H1 (cell line): ENCODE measurements at regions of chr1 and their contacts with region 1.

Region 1: GRCh38 chr1:157193702-157194391 is 55.7 kb upstream of the ETV3 start:
- DNase-seq: peak; percentile 53 to 95
- H3K4me3 ChIP-seq: no peak overlapping the region
- H3K27ac ChIP-seq: no peak overlapping the region
- H3K4me1 ChIP-seq: peaks cover 0 to 2% (median under 1%) of the 10 kb centered on the region in 4 experiments; a peak in 1 of 7 replicates
- H3K27me3 ChIP-seq: no peaks in the 10 kb centered on the region; a peak in 2 of 7 replicates
- CTCF ChIP-seq: peak; percentile 67 to 84 (median 80)
- EP300 ChIP-seq: no peak
- POLR2A ChIP-seq: no peak
- RAD21 ChIP-seq: peak; percentile 80 to 81

Region 2: DNA sequence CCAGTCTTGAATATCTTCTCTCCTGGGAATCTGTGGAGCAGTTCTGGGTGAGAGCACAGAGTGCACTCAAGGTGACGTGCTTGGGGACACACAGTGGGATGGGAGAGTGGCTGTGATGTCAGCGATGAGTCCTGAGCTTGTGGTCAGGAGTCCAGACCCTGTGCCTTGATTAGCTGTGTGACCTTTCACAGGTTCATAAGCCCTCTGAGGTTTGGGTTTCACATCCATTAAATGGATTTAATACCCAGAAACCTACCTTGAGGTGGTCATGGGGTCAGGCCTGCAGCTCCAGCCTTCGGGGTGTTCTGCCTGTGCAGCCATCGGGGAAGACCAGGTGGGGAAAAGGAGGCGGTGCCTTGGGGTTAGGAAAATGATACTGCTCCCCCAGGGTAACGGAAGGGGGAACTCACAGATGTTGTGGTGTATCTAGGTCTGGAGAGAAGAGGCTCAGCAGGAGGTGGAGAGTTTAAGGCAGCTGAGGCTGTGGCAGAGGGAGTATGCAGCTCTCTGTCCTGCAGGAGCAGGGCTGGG is 17.2 kb before region 1 on chr1:
- CTCF ChIA-PET with region 1: interaction called, 36 read pairs
- POLR2A ChIA-PET with region 1: no interaction called
- DNase-seq: no peak
- H3K4me3 ChIP-seq: no peak overlapping the region
- H3K27ac ChIP-seq: no peak overlapping the region
- H3K4me1 ChIP-seq: peaks cover 0 to 3% (median 2%) of the 10 kb centered on the region in 4 experiments; a peak in 2 of 7 replicates
- H3K27me3 ChIP-seq: 0 out of 7 replicates have a peak, but pooled peaks cover 0 to 3% (median 0%) of the 10 kb centered on the region in 4 experiments
- CTCF ChIP-seq: no peak
- EP300 ChIP-seq: no peak
- POLR2A ChIP-seq: no peak
- RAD21 ChIP-seq: no peak

Region 3: DNA sequence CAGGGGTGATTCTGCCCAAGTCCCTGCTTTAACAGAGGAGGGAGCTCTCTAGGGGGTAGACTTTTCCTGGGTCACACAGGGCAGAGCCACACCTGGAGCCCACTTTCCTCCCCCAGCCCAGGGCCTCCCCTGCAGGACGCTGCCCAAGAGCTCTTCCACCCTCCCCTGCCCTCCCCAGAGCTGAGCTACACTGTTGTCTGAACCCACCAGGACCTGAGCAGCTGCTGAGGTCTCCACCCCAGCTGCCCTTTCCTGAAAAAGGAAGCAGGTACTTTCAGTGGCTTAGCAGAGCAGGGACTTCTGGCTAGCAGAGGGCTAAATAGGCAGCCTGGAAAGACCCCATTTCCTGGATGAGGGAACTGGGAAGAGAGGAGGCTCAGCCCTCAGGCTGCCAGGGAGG is 113.6 kb after region 1 on chr1:
- CTCF ChIA-PET with region 1: interaction called, 51 read pairs
- POLR2A ChIA-PET with region 1: no interaction called
- DNase-seq: no peak
- H3K4me3 ChIP-seq: no peak overlapping the region
- H3K27ac ChIP-seq: no peak overlapping the region
- H3K4me1 ChIP-seq: peaks cover 0 to 7% (median 3%) of the 10 kb centered on the region in 4 experiments; a peak in 3 of 7 replicates
- H3K27me3 ChIP-seq: peaks cover 0 to 1% (median 0%) of the 10 kb centered on the region in 4 experiments; a peak in 1 of 7 replicates
- CTCF ChIP-seq: no peak
- EP300 ChIP-seq: no peak
- POLR2A ChIP-seq: no peak
- RAD21 ChIP-seq: no peak

Region 4: DNA sequence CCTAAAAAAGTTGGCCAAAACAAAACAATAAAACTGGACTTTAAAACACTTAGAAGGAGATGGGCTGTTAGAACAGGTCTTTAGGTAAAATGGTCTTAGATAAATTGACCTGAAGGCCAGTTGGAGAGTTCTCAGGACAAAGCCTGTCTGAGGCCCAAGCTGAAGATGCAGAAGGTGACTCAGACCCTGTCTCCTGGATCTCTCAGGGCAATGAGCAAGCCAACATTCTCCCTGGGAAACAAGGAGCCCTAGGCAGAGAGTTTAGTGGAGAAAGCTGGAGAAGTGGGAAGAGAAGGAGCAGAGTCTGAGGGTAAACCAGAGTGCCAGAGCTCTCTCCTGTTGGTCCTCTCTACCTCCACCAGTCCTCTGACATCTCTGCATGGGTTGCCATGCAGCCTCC is 288.3 kb after region 1 on chr1:
- CTCF ChIA-PET with region 1: interaction called, 13 read pairs
- POLR2A ChIA-PET with region 1: no interaction called
- DNase-seq: no peak
- H3K4me3 ChIP-seq: no peak overlapping the region
- H3K27ac ChIP-seq: no peak overlapping the region
- H3K4me1 ChIP-seq: 0 out of 7 replicates have a peak, but pooled peaks cover 0 to 3% (median 0%) of the 10 kb centered on the region in 4 experiments
- H3K27me3 ChIP-seq: no peaks in the 10 kb centered on the region
- CTCF ChIP-seq: no peak
- EP300 ChIP-seq: no peak
- POLR2A ChIP-seq: no peak
- RAD21 ChIP-seq: no peak

Region 5: DNA sequence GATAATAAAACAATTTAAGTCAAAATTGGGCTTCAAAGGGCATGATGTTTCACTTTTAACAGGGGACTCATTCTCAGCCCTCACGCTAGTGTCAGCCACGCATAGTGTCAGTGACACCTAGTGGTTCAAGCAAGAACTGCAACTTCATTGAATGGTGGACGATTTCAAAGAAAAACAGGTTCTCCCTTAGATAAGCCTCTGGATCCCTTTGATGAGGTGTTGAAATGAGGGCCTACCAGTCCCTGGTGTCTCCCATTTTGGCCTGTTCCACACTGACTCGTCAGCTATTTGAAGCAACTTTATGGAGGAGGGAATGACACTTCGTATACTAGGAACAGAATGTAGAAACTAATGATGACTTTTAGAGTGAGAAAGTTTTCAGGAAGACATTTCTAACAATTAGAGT is 302.3 kb after region 1 on chr1:
- CTCF ChIA-PET with region 1: interaction called, 28 read pairs
- POLR2A ChIA-PET with region 1: no interaction called
- DNase-seq: peak in 1 of 2 experiments; percentile 71
- H3K4me3 ChIP-seq: no peak overlapping the region
- H3K27ac ChIP-seq: no peak overlapping the region
- H3K4me1 ChIP-seq: no peaks in the 10 kb centered on the region; a peak in 1 of 7 replicates
- H3K27me3 ChIP-seq: no peaks in the 10 kb centered on the region
- CTCF ChIP-seq: peak; percentile 26 to 87 (median 71)
- EP300 ChIP-seq: no peak
- POLR2A ChIP-seq: no peak
- RAD21 ChIP-seq: peak; percentile 72 to 79